K562 (cell line): ENCODE measurements at regions of chr5 and their contacts with region 1.

Region 1: GRCh38 chr5:100903039-100903887 is at the start of gene ST8SIA4:
- DNase-seq: peak in 3 of 4 experiments; percentile 16 to 67 (median 39)
- ATAC-seq: peak; percentile 84
- H3K4me3 ChIP-seq: peak within 1 kb of the TSS; percentile 34
- H3K27ac ChIP-seq: no peak within 1 kb of the TSS
- H3K4me1 ChIP-seq: peaks cover 0 to 8% of the 10 kb centered on the region in 2 experiments; a peak in 2 of 5 replicates
- H3K27me3 ChIP-seq: no peaks in the 10 kb centered on the region
- CTCF ChIP-seq: no peak
- EP300 ChIP-seq: no peak
- POLR2A ChIP-seq: peak; percentile 52; the same call in 1 of the 2 replicates
- RAD21 ChIP-seq: no peak
- polyA plus RNA-seq, gene ST8SIA4: 0.22 to 0.51 TPM

Region 2: DNA sequence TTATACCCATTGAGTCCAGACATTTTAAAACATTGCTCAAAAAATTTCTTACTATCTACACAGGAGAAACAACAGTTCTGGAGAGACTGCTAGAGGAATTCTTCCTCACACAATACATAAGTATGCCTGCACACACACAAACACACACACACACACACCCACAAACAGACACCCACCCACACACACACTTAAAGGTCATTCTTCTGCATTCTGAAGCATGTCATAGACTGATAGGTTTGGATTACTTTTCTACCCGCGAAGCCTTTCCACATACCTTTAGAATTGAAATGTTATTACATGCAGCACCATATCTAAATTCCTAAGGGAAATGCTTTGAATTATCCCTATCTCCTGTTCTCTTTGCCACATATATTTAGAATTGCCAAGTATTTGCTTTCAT is 287.9 kb before region 1 on chr5:
- CTCF ChIA-PET with region 1: no interaction called
- POLR2A ChIA-PET with region 1: no interaction called
- in situ Hi-C with region 1: no loop called
- intact Hi-C with region 1: loop called (anchors 10 kb)
- DNase-seq: no peak
- ATAC-seq: no peak
- H3K4me3 ChIP-seq: no peak overlapping the region
- H3K27ac ChIP-seq: no peak overlapping the region
- H3K4me1 ChIP-seq: no peaks in the 10 kb centered on the region
- H3K27me3 ChIP-seq: no peaks in the 10 kb centered on the region
- CTCF ChIP-seq: no peak
- EP300 ChIP-seq: no peak
- POLR2A ChIP-seq: no peak
- RAD21 ChIP-seq: no peak

Region 3: GRCh38 chr5:101045689-101046088 is 142.4 kb after region 1 on chr5:
- CTCF ChIA-PET with region 1: no interaction called
- POLR2A ChIA-PET with region 1: no interaction called
- in situ Hi-C with region 1: no loop called
- intact Hi-C with region 1: loop called (anchors 2 kb)
- DNase-seq: no peak
- ATAC-seq: no peak
- H3K4me3 ChIP-seq: no peak overlapping the region
- H3K27ac ChIP-seq: no peak overlapping the region
- H3K4me1 ChIP-seq: no peaks in the 10 kb centered on the region
- H3K27me3 ChIP-seq: no peaks in the 10 kb centered on the region
- CTCF ChIP-seq: peak in 1 of 3 experiments; percentile 25; a peak in 1 of 6 replicates
- EP300 ChIP-seq: no peak
- POLR2A ChIP-seq: no peak
- RAD21 ChIP-seq: peak in 1 of 2 experiments; percentile 34; a peak in 2 of 4 replicates